ENCODE measurements at regions of chr19 and their contacts with region 1.

Region 1: DNA sequence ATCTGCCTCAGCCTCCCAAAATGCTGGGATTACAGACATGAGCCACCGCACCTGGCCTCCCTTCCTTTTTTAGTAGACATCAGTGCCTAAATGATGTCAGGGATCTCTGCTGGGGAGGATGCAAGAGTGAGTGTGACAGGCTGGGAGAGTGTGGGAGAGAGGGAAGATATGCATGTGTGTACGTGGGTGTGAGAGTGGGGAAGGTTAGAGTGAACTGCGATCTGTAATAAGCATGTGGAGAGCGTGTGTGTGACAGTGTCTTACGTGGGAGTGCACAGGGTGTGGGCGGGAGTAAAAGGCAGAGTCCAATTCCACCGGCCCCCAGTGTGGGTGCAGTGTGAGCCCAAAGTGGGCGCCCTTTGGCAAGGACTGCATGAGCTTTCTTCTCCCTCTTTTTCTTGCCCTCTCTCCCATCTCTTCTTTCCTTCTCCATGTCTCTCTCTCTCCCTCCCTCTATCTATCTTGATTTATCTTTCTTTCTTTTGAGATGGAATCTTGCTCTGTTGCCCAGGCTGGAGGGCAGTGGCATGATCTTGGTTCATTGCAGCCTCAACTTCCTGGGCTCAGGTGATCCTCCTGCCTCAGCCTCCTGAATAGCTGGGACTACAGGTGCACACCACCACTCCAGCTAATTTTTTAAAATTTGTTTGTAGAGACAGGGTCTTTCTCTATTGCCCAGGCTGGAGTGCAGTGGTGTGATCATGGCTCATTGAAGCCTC is 893 bp upstream of the NPHS1 start:
- DNase-seq: no peak
- H3K4me3 ChIP-seq: no peak overlapping the region
- H3K27me3 ChIP-seq: peaks cover 27% of the 10 kb centered on the region
- CTCF ChIP-seq: no peak

Region 2: GRCh38 chr19:35790981-35791813 is 62.0 kb before region 1 on chr19:
- CTCF ChIA-PET with region 1: no interaction called
- POLR2A ChIA-PET with region 1: no interaction called
- DNase-seq: no peak
- H3K4me3 ChIP-seq: no peak overlapping the region
- H3K27me3 ChIP-seq: no peaks in the 10 kb centered on the region; the same call in 1 of the 2 replicates
- CTCF ChIP-seq: peak; percentile 14; the same call in 1 of the 2 replicates

Region 3: DNA sequence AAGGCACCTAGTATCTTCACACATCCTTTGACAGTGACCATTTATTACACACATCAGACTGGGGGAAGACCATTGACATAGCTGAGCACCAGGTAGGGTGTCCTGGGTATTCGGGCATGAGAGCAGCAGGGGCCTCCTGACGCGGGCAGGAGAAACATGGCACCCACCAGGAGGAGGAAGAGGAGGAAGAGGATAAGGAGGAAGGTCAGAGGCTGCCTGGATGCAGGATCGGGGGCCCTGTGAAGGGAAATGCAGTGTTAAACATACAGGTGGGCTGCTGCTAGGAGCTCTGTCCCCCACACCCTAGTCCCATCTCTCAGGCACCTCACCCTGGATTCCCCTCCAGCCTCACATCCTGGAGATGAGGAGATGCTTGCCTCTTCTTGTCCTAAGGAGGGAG is 150.1 kb after region 1 on chr19:
- CTCF ChIA-PET with region 1: no interaction called
- POLR2A ChIA-PET with region 1: interaction called, 14 read pairs
- DNase-seq: no peak
- H3K4me3 ChIP-seq: no peak overlapping the region
- H3K27me3 ChIP-seq: no peaks in the 10 kb centered on the region
- CTCF ChIP-seq: no peak